ENCODE measurements at regions of chr3 and their contacts with region 1.

Region 1: GRCh38 chr3:181052256-181052655 is 62.7 kb upstream of the DNAJC19 start:
- DNase-seq: no peak

Region 2: GRCh38 chr3:182967218-182968204 is 1915.3 kb after region 1 on chr3:
- intact Hi-C with region 1: loop called in 1 of 2 experiments (anchors 5 kb)
- DNase-seq: no peak